CD4-positive, alpha-beta memory T cell (primary cell): ENCODE measurements at regions of chr9 and their contacts with region 1.

Region 1: DNA sequence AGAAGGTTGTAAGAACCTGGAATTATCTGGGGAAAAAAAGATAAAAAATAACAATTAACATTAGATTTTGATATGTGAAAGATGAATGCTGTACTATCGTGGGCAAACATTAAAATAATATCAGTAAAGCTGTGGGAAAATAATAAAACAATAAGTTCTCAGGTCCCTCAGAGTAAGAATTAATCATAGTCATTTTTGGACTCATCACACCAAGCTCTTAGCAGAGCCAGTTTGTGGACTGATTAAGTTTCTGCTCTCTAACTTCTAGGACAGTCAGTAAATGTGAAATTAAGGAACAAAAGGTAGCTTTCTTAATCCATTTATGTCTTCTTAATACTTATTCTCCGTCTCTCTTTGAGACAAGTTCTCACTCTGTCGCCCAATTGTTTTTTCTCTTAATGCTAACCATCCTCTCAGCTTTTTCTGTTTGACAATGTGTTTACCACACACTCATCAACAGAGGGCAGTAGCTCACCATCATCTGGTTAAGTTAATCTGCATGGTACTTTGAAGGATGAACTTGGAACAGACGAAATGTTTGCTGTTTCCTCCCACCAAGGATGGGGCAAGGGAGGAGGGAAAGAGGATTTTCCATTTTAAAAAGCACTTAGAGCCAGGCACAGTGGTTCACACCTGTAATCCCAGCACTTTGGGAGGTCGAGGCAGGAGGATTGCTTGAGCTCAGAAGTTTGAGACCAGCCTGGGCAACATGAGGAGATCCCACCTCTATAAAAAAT is 5.3 kb upstream of the ACO1 start:
- DNase-seq: peak; percentile 70 to 76 (median 73)
- H3K4me3 ChIP-seq: no peak overlapping the region
- H3K4me3 Mint-ChIP-seq: peak overlapping the region in 3 of 8 donors; percentile 2 to 68 (median 11)
- H3K27ac ChIP-seq: no peak overlapping the region
- H3K27ac Mint-ChIP-seq: peak overlapping the region in 4 of 7 donors; percentile 1 to 91 (median 68)
- H3K4me1 ChIP-seq: peaks cover 14% of the 10 kb centered on the region
- H3K4me1 Mint-ChIP-seq: peaks cover 14 to 16% (median 15%) of the 10 kb centered on the region in 4 donors
- H3K27me3 ChIP-seq: no peaks in the 10 kb centered on the region
- H3K27me3 Mint-ChIP-seq: peaks cover 3 to 7% of the 10 kb centered on the region in 2 donors

Region 2: DNA sequence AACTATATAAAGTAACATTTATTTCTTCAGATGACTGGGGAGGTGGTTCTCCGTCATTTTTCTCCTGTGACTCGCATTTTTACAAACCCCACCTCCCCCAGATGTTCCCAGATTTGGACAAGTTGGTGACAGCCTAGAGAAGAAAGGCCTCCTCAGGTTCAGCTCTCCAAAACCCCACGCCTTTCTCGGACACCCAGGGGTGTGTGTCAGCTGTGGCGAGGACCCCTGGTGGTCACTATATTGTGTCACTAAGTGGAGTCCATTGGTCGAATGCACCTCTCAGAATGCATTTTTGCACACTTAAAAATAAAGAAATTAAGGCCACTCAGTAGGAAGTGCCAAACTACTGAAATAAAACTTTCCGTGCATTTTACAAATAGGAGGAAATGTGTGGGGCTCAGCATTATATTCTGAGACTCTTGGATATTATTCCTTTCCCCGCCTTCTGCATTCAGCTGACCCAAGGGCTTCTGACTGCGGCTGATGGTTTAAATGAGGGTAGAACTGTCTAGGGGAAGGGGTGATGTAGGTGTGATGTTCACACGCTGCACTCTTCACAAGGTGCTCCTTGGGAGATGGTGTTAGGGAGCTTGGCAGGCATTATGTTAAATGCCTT is 52.9 kb after region 1 on chr9:
- CTCF ChIA-PET with region 1: interaction called, 105 read pairs
- POLR2A ChIA-PET with region 1: interaction called, 4 read pairs
- intact Hi-C with region 1: loop called (anchors 1 kb)
- DNase-seq: peak in 4 of 5 donors; percentile 9 to 15 (median 12)
- H3K4me3 ChIP-seq: no peak overlapping the region
- H3K4me3 Mint-ChIP-seq: no peak overlapping the region
- H3K27ac ChIP-seq: no peak overlapping the region
- H3K27ac Mint-ChIP-seq: no peak overlapping the region
- H3K4me1 ChIP-seq: no peaks in the 10 kb centered on the region
- H3K4me1 Mint-ChIP-seq: peaks cover 0 to 4% (median 2%) of the 10 kb centered on the region in 4 donors
- H3K27me3 ChIP-seq: no peaks in the 10 kb centered on the region
- H3K27me3 Mint-ChIP-seq: no peaks in the 10 kb centered on the region

Region 3: GRCh38 chr9:32526041-32526706 is 147.0 kb after region 1 on chr9 and contains the start of gene RIGI:
- CTCF ChIA-PET with region 1: interaction called, 133 read pairs
- POLR2A ChIA-PET with region 1: interaction called, 27 read pairs
- intact Hi-C with region 1: loop called (anchors 1 kb)
- DNase-seq: peak; percentile 80 to 92 (median 81)
- H3K4me3 ChIP-seq: peak within 1 kb of the TSS; percentile 78 to 93
- H3K4me3 Mint-ChIP-seq: peak within 1 kb of the TSS; percentile 91 to 99 (median 97)
- H3K27ac ChIP-seq: peak within 1 kb of the TSS; percentile 94
- H3K27ac Mint-ChIP-seq: peak within 1 kb of the TSS; percentile 93 to 98 (median 97)
- H3K4me1 ChIP-seq: peaks cover 46% of the 10 kb centered on the region
- H3K4me1 Mint-ChIP-seq: peaks cover 40 to 70% (median 54%) of the 10 kb centered on the region in 4 donors
- H3K27me3 ChIP-seq: no peaks in the 10 kb centered on the region
- H3K27me3 Mint-ChIP-seq: no peaks in the 10 kb centered on the region
- total RNA-seq, gene RIGI: 29.0 to 32.0 TPM

Region 4: DNA sequence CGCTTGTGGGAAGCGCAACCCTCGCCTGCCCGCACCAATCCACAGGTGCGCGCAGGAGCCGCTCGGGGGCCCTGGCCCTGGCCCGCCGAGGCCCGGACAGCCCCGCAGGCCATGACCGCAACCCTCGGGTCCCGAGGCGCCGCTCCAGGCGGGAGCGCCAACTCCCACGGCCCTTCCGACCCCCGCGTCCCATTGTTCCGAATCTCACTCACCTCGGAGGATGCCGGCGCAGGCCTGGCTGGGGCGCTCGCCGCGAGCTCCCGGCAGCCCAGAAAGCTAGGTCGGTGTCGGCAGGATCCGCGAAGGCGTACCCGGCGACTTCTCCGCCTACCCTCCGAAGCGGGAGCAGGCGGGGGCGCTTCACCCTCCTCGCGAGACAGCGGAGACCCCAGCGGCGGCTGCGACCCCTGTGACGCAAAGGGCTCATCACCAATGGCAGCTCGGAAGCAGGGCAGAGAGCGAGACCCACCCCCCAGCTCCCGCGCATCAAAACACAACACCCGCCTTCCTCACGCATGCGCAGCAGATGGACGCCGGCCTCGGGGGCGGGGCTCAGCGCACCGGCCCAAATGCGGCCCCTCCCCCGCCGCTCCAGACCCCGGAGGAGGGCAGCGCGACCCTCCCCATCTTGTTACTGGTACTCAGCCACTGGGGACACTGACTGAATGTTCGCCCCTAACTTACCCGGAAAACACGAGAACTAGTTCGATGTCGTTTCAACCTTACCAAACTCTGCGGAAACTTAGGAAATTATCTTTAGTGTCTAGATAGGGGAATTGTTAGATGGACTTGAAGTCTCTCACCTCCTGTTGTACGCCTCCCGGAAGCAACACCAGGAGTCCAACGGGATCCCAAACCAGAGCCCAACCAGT is 171.6 kb after region 1 on chr9:
- CTCF ChIA-PET with region 1: interaction called, 43 read pairs
- POLR2A ChIA-PET with region 1: interaction called, 27 read pairs
- intact Hi-C with region 1: loop called (anchors 1 kb)
- DNase-seq: peak; percentile 95 to 99 (median 95)
- H3K4me3 ChIP-seq: peak overlapping the region; percentile 93 to 98
- H3K4me3 Mint-ChIP-seq: peak overlapping the region; percentile 92 to 99 (median 97)
- H3K27ac ChIP-seq: peak overlapping the region; percentile 88
- H3K27ac Mint-ChIP-seq: peak overlapping the region; percentile 92 to 100 (median 98)
- H3K4me1 ChIP-seq: peaks cover 47% of the 10 kb centered on the region
- H3K4me1 Mint-ChIP-seq: peaks cover 28 to 66% (median 49%) of the 10 kb centered on the region in 4 donors
- H3K27me3 ChIP-seq: no peaks in the 10 kb centered on the region
- H3K27me3 Mint-ChIP-seq: no peaks in the 10 kb centered on the region

Region 5: DNA sequence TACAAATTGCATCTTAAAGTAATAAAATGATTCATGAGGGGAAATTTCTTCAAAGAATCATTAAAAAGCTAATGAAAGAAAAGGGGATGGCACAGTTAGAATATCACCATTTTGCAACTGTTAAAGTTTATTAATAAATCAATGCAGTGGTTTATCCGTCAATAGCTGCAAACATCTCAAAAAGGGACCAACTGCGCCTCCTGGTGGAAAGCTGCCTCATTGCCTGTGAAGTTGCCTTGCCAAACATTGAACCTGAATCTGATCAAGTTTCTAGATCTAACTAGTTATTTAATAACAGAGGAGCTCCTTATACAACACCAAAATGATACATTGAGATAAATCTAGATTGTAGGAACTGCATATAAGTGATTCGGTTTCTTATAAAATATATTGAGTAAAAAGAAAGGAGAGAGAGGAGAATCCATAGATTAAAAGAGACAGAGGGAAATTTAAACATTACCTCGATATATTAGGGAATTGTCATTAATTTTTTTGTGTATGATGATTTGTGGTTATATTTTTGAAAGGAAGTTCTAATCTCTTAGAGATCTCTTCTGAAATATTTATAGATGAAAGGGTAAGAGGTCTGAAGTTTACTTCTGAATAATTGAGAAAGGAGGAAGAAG is 200.7 kb after region 1 on chr9:
- CTCF ChIA-PET with region 1: interaction called, 659 read pairs
- POLR2A ChIA-PET with region 1: interaction called, 48 read pairs
- intact Hi-C with region 1: loop called (anchors 1 kb)
- DNase-seq: peak; percentile 68 to 75 (median 72)
- H3K4me3 ChIP-seq: no peak overlapping the region
- H3K4me3 Mint-ChIP-seq: no peak overlapping the region
- H3K27ac ChIP-seq: no peak overlapping the region
- H3K27ac Mint-ChIP-seq: no peak overlapping the region
- H3K4me1 ChIP-seq: no peaks in the 10 kb centered on the region
- H3K4me1 Mint-ChIP-seq: peaks cover 0 to 5% (median 0%) of the 10 kb centered on the region in 4 donors
- H3K27me3 ChIP-seq: peaks cover 3% of the 10 kb centered on the region
- H3K27me3 Mint-ChIP-seq: peaks cover 7 to 11% of the 10 kb centered on the region in 2 donors